CD4-positive, alpha-beta T cell (primary cell): ENCODE measurements at regions of chr10 and their contacts with region 1.

Region 1: GRCh38 chr10:8404391-8405120 is 350.1 kb downstream of the GATA3 start:
- DNase-seq: peak in 9 of 14 experiments; percentile 5 to 94 (median 38)
- ATAC-seq: peak; percentile 75
- H3K4me3 ChIP-seq: peak overlapping the region; percentile 14
- H3K4me3 Mint-ChIP-seq: peak overlapping the region; percentile 74
- H3K27ac ChIP-seq: peak overlapping the region; percentile 68 to 83
- H3K27ac Mint-ChIP-seq: peak overlapping the region; percentile 82
- H3K4me1 ChIP-seq: peaks cover 65% of the 10 kb centered on the region
- H3K4me1 Mint-ChIP-seq: peaks cover 77% of the 10 kb centered on the region
- H3K27me3 ChIP-seq: no peaks in the 10 kb centered on the region
- H3K27me3 Mint-ChIP-seq: no peaks in the 10 kb centered on the region
- CTCF ChIP-seq: no peak

Region 2: GRCh38 chr10:8183241-8183704 is 221.3 kb before region 1 on chr10:
- CTCF ChIA-PET with region 1: interaction called, 4 read pairs
- POLR2A ChIA-PET with region 1: interaction called, 3 read pairs
- intact Hi-C with region 1: loop called in 1 of 2 experiments (anchors 2 kb)
- DNase-seq: peak in 12 of 14 experiments; percentile 8 to 90 (median 26)
- ATAC-seq: peak; percentile 92
- H3K4me3 ChIP-seq: peak overlapping the region; percentile 6
- H3K4me3 Mint-ChIP-seq: peak overlapping the region; percentile 72
- H3K27ac ChIP-seq: peak overlapping the region; percentile 29 to 78
- H3K27ac Mint-ChIP-seq: peak overlapping the region; percentile 94
- H3K4me1 ChIP-seq: peaks cover 23% of the 10 kb centered on the region
- H3K4me1 Mint-ChIP-seq: peaks cover 48% of the 10 kb centered on the region
- H3K27me3 ChIP-seq: no peaks in the 10 kb centered on the region
- H3K27me3 Mint-ChIP-seq: no peaks in the 10 kb centered on the region
- CTCF ChIP-seq: no peak

Region 3: GRCh38 chr10:8365935-8366911 is 38.3 kb before region 1 on chr10:
- CTCF ChIA-PET with region 1: no interaction called
- POLR2A ChIA-PET with region 1: interaction called, 3 read pairs
- intact Hi-C with region 1: loop called in 1 of 2 experiments (anchors 5 kb)
- DNase-seq: peak in 12 of 14 experiments; percentile 1 to 88 (median 32)
- ATAC-seq: peak; percentile 85
- H3K4me3 ChIP-seq: no peak overlapping the region
- H3K4me3 Mint-ChIP-seq: peak overlapping the region; percentile 35
- H3K27ac ChIP-seq: peak overlapping the region in 1 of 2 donors; percentile 50
- H3K27ac Mint-ChIP-seq: peak overlapping the region; percentile 76
- H3K4me1 ChIP-seq: peaks cover 32% of the 10 kb centered on the region
- H3K4me1 Mint-ChIP-seq: peaks cover 41% of the 10 kb centered on the region
- H3K27me3 ChIP-seq: no peaks in the 10 kb centered on the region
- H3K27me3 Mint-ChIP-seq: no peaks in the 10 kb centered on the region
- CTCF ChIP-seq: no peak

Region 4: DNA sequence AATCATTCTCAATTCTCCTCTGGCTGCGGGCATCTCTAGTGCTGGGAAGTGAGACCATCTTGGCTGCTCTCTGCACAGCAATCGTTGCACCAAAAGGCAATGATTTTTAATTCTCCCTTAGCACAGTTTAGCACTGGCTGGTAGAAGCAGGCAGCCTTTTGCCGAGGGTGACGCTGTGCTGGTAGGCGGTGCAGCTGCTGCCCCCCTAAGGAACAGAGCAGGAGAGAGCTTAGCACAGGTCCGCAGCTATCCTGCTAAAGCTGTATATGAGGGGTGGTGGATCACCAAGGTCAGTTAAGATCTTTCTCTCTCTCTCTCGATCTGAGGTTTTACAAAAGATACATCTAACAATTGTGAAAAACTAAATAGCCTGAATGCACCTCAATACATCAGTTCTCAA is 40.1 kb after region 1 on chr10:
- CTCF ChIA-PET with region 1: interaction called, 3 read pairs
- POLR2A ChIA-PET with region 1: interaction called, 4 read pairs
- intact Hi-C with region 1: loop called in 1 of 2 experiments (anchors 5 kb)
- DNase-seq: peak; percentile 6 to 73 (median 34)
- ATAC-seq: peak; percentile 87
- H3K4me3 ChIP-seq: no peak overlapping the region
- H3K4me3 Mint-ChIP-seq: no peak overlapping the region
- H3K27ac ChIP-seq: no peak overlapping the region
- H3K27ac Mint-ChIP-seq: no peak overlapping the region
- H3K4me1 ChIP-seq: peaks cover 5% of the 10 kb centered on the region
- H3K4me1 Mint-ChIP-seq: peaks cover 15% of the 10 kb centered on the region
- H3K27me3 ChIP-seq: no peaks in the 10 kb centered on the region
- H3K27me3 Mint-ChIP-seq: no peaks in the 10 kb centered on the region
- CTCF ChIP-seq: peak; percentile 57

Region 5: GRCh38 chr10:8568401-8568800 is 163.8 kb after region 1 on chr10:
- CTCF ChIA-PET with region 1: no interaction called
- POLR2A ChIA-PET with region 1: no interaction called
- intact Hi-C with region 1: no loop called
- DNase-seq: no peak
- ATAC-seq: no peak
- H3K4me3 ChIP-seq: no peak overlapping the region
- H3K4me3 Mint-ChIP-seq: no peak overlapping the region
- H3K27ac ChIP-seq: no peak overlapping the region
- H3K27ac Mint-ChIP-seq: no peak overlapping the region
- H3K4me1 ChIP-seq: no peaks in the 10 kb centered on the region
- H3K4me1 Mint-ChIP-seq: no peaks in the 10 kb centered on the region
- H3K27me3 ChIP-seq: peaks cover 0 to 4% of the 10 kb centered on the region in 2 experiments
- H3K27me3 Mint-ChIP-seq: peaks cover 17% of the 10 kb centered on the region
- CTCF ChIP-seq: no peak